ENCODE measurements at regions of chr1 and their contacts with region 1.

Region 1: DNA sequence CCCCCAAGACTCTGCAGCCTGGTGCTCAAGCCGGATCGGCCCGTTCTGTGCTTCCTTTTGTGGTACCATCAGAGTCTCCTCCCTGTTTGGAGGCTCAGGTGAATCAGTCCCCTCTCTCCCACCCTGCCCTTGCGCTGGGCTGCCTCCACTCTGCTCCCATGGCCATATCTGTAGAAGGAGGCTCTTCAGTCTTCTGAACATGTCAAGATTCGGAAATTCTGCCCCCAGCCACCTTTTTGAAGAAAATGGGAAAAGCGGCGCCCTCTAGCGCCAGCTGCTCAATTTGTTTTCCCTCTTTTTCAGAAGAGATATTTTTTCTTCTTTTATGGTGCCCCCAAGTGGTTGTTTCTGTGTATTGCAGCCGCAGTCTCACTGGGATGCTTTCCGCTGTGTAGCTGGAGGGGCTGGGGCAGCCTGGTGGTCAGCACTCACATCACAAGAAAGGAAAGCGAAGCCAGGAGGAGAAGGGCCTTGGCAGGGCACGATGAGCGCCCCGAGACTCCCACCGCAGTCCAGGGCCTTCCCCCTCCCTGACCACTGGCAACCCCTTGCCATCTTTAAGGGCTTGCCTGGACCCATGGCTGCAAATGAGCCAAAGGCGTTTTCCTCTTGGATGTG is 58.4 kb upstream of the CACNA1E start:
- DNase-seq: peak; percentile 86
- ATAC-seq: peak; percentile 70
- H3K4me3 Mint-ChIP-seq: peak overlapping the region; percentile 17
- H3K27ac Mint-ChIP-seq: peak overlapping the region; percentile 31
- H3K4me1 Mint-ChIP-seq: peaks cover 12% of the 10 kb centered on the region
- H3K27me3 Mint-ChIP-seq: peaks cover 12% of the 10 kb centered on the region

Region 2: DNA sequence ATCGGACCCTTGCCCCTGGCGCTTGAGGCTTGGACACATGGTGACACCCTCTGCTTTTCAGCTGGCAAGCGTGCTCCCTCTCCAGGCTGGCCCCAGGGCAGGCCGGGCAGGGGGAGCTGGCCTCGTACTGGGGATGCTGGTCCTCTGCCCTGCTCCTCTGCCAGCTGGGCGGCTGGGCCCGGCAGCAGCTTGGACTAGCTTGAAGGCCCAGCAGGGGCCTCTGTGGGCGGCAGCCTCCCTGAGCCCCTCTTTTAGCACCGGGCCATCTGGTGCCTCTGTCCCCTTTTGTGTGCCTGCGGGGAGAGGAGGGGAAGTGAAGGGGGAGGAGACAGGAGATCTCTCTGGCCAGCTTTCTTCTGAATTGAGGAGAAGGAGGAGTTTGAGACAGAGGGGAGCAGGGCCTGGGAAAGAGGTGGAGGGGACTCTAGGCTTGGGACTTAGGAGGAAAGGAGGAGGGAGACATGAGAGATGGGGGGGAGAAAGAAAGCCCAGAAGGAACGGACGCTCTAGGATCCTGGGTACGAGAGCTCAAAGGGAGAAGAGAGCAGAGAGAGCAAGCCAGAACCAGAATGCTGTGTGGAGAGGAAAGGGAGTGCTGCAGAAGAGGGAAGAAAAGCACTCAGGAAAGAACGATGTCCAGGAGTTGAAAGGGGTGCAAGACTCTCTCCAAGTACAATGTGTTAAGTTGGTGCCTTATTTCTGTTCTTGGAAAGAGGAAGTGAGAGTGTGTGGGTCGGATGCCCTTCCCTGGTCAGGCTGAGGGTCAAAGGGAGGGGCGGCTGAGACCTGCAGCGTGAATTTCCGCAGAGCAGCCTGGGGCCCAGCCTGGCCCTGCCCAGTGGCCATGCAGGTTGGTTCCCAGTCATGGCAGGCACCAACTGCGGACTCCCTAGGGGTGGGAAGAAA is 296.1 kb before region 1 on chr1:
- CTCF ChIA-PET with region 1: no interaction called
- POLR2A ChIA-PET with region 1: no interaction called
- DNase-seq: no peak
- ATAC-seq: no peak
- H3K4me3 Mint-ChIP-seq: peak overlapping the region; percentile 16
- H3K27ac Mint-ChIP-seq: peak overlapping the region; percentile 56
- H3K4me1 Mint-ChIP-seq: peaks cover 66% of the 10 kb centered on the region
- H3K27me3 Mint-ChIP-seq: no peaks in the 10 kb centered on the region

Region 3: GRCh38 chr1:181184621-181185020 is 240.3 kb before region 1 on chr1:
- CTCF ChIA-PET with region 1: interaction called, 139 read pairs
- POLR2A ChIA-PET with region 1: no interaction called
- DNase-seq: no peak
- ATAC-seq: no peak
- H3K4me3 Mint-ChIP-seq: no peak overlapping the region
- H3K27ac Mint-ChIP-seq: no peak overlapping the region
- H3K4me1 Mint-ChIP-seq: peaks cover 8% of the 10 kb centered on the region
- H3K27me3 Mint-ChIP-seq: peaks cover 20% of the 10 kb centered on the region

Region 4: DNA sequence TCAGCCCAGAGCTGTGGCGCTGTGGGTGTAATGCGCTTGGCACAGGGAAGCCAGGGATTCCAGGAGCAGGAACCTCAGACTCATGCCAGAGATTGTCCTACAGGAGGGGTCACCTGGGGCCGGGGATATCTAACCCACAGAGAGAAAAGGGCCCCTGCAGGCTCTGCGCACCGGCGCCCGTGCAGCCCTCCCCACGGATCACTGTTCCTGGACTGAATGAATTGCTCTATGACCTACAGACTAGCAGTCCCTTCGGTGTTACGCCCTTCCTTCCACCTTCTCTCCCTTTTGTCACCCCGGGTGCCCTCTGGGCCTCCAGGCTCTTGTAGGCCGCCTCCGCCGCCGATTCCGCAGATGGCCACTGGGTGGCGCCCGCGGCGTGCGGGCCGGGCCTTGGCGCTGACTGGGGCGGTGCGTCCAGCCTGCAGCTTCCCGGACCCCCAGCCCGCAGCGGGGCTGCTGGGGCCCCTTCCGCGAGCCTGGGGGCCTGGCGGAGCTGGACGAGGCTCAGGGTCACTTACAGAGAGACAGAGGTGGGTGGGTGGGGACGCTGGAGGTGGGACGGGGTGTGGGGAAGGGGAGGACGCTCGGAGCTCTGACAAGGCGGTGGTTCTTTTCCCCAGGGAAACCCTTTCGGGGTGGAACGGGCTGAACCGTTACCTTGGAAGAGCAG is 235.1 kb before region 1 on chr1:
- CTCF ChIA-PET with region 1: interaction called, 139 read pairs
- POLR2A ChIA-PET with region 1: no interaction called
- DNase-seq: peak; percentile 76
- ATAC-seq: peak; percentile 92
- H3K4me3 Mint-ChIP-seq: no peak overlapping the region
- H3K27ac Mint-ChIP-seq: no peak overlapping the region
- H3K4me1 Mint-ChIP-seq: peaks cover 2% of the 10 kb centered on the region
- H3K27me3 Mint-ChIP-seq: peaks cover 9% of the 10 kb centered on the region

Region 5: DNA sequence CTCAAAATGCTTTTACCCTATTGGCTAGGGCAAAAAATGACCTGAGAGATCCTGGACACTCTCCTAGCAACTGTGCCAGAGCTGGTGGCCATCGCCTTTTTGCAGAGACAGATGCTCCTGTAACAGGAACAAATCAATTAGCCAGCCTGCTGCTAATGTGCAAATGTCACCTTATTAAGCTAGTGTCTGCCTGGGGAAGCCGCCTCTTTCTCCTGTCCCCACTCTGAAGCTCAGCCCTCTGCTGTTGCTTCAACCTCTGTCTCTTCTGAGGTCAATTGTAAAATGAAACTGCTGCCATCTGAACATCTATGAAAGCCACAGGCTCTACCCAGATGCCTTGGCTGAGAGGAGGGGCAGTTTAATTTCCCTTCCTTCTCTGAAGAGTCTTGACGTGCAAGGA is 27.1 kb before region 1 on chr1:
- CTCF ChIA-PET with region 1: interaction called, 34 read pairs
- POLR2A ChIA-PET with region 1: interaction called, 3 read pairs
- DNase-seq: peak; percentile 65
- ATAC-seq: peak; percentile 72
- H3K4me3 Mint-ChIP-seq: peak overlapping the region; percentile 62
- H3K27ac Mint-ChIP-seq: no peak overlapping the region
- H3K4me1 Mint-ChIP-seq: peaks cover 23% of the 10 kb centered on the region
- H3K27me3 Mint-ChIP-seq: no peaks in the 10 kb centered on the region